Activated CD4-positive, alpha-beta T cell treated with anti-CD3 and anti-CD28 coated beads for 36 hours (primary cell): ENCODE measurements at regions of chr15 and their contacts with region 1.

Region 1: DNA sequence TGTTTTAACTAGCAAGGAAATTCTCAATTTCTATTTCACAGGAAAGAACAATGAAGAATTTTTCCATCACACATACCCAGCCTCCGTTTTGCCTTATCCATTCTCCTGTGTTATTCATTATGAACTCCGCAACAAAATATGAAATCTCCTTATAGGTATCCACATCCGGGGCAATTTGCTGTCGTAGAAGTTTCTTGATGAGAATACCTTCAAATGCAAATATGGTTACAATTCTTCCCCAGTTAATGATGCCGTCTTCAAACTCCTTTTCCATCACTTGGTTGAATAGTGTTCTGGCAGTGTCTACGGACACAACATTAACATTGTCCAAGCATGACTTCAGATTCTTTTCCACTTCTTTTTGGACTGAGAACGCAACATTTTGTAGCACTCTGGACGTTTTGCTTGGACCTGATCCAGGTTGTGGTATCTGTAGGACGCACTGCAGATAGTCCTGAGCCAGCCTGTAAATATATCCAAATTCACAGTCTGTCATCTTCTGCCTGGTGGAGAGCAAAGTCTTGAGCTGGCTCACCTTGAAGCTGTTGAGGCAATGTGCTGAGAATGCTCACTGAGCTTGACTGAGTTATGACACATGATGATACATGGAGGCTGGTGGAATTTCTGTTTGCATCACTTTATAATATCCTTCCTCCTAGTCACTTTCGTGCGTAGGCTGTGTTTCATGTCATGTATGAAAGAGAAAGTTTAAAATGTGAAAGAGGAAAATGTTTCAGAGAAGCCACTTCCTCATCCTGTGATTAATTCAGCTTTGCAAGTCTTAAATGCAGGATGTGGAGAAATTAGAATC is at the start of gene BCL2A1:
- DNase-seq: peak; percentile 83
- ATAC-seq: peak; percentile 72
- H3K4me3 Mint-ChIP-seq: peak within 1 kb of the TSS; percentile 92
- H3K27ac Mint-ChIP-seq: peak within 1 kb of the TSS; percentile 99
- H3K4me1 Mint-ChIP-seq: peaks cover 46% of the 10 kb centered on the region
- H3K27me3 Mint-ChIP-seq: no peaks in the 10 kb centered on the region
- total RNA-seq, gene BCL2A1: 82.2 to 103 TPM

Region 2: GRCh38 chr15:79640206-79640605 is 330.6 kb before region 1 on chr15:
- CTCF ChIA-PET with region 1: no interaction called
- POLR2A ChIA-PET with region 1: no interaction called
- intact Hi-C with region 1: loop called in 1 of 2 experiments (anchors 5 kb)
- DNase-seq: no peak
- ATAC-seq: no peak
- H3K4me3 Mint-ChIP-seq: no peak overlapping the region
- H3K27ac Mint-ChIP-seq: no peak overlapping the region
- H3K4me1 Mint-ChIP-seq: peaks cover 8% of the 10 kb centered on the region
- H3K27me3 Mint-ChIP-seq: peaks cover 29% of the 10 kb centered on the region

Region 3: DNA sequence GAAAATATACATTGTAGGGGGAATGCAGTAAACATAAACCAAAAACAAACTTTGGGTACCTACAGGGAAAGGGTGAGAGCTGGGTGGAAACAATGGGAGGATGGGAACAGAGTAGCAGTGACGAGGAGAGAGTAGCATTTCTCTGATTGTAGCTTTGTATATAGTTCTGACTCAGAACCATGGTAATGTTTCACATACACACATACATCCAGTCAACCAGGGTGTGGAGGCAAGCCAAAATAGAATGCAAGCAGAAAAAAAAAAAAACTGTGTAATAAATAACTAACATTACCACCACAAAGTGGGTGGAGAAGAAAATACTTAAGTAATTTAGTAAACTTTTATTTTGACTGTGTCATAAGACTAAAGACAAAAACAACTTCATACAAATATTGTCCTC is 27.0 kb before region 1 on chr15:
- CTCF ChIA-PET with region 1: interaction called, 3 read pairs
- POLR2A ChIA-PET with region 1: interaction called, 3 read pairs
- intact Hi-C with region 1: loop called (anchors 2 kb)
- DNase-seq: no peak
- ATAC-seq: peak; percentile 75
- H3K4me3 Mint-ChIP-seq: no peak overlapping the region
- H3K27ac Mint-ChIP-seq: no peak overlapping the region
- H3K4me1 Mint-ChIP-seq: peaks cover 17% of the 10 kb centered on the region
- H3K27me3 Mint-ChIP-seq: peaks cover 2% of the 10 kb centered on the region

Region 4: GRCh38 chr15:80031841-80032240 is 61.0 kb after region 1 on chr15:
- CTCF ChIA-PET with region 1: no interaction called
- POLR2A ChIA-PET with region 1: interaction called, 3 read pairs
- intact Hi-C with region 1: loop called in 1 of 2 experiments (anchors 1 kb)
- DNase-seq: peak; percentile 64
- ATAC-seq: peak; percentile 85
- H3K4me3 Mint-ChIP-seq: no peak overlapping the region
- H3K27ac Mint-ChIP-seq: peak overlapping the region; percentile 72
- H3K4me1 Mint-ChIP-seq: peaks cover 25% of the 10 kb centered on the region
- H3K27me3 Mint-ChIP-seq: no peaks in the 10 kb centered on the region

Region 5: DNA sequence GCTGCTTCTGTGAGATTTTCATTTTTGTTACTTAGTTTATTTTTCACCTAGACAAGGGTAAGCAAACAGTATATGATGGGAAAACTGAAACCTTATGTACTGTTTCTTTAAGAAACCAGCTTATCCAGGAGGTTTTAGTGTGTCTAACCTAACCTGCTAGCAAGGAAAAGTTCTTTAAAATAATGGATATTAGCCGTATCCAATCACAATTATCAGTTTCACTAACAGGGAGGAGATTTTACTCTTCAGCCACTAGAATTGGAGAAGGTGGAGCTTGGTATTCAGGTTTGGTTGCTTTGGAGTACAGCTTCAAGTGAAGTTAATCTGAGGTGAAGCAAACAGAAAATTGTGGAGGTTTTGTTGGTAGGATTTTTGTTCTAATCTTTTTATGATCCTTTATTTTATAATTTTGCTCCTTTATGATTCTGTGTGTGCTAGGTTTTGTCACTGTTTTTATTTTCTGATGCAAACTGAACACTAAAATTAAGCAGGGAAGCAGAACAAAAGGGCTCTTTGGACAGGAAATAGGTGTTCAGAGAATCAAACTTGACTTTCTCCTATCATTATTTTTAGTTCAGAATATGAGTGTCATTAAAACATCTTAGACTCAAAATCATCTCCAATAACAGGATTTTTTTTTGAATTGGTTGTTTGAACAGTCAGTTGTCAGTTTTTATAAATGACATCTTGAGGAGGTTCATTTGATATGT is 101.6 kb after region 1 on chr15:
- CTCF ChIA-PET with region 1: no interaction called
- POLR2A ChIA-PET with region 1: no interaction called
- intact Hi-C with region 1: no loop called
- DNase-seq: no peak
- ATAC-seq: peak; percentile 98
- H3K4me3 Mint-ChIP-seq: peak overlapping the region; percentile 80
- H3K27ac Mint-ChIP-seq: peak overlapping the region; percentile 40
- H3K4me1 Mint-ChIP-seq: peaks cover 59% of the 10 kb centered on the region
- H3K27me3 Mint-ChIP-seq: no peaks in the 10 kb centered on the region

Region 6: GRCh38 chr15:80317389-80318182 is 346.8 kb after region 1 on chr15:
- CTCF ChIA-PET with region 1: no interaction called
- POLR2A ChIA-PET with region 1: no interaction called
- intact Hi-C with region 1: no loop called
- DNase-seq: peak; percentile 24
- ATAC-seq: no peak
- H3K4me3 Mint-ChIP-seq: no peak overlapping the region
- H3K27ac Mint-ChIP-seq: no peak overlapping the region
- H3K4me1 Mint-ChIP-seq: no peaks in the 10 kb centered on the region
- H3K27me3 Mint-ChIP-seq: peaks cover 25% of the 10 kb centered on the region

Region 7: GRCh38 chr15:81000624-81001151 is 1029.9 kb after region 1 on chr15 and contains the start of gene TLNRD1:
- CTCF ChIA-PET with region 1: no interaction called
- POLR2A ChIA-PET with region 1: no interaction called
- intact Hi-C with region 1: loop called in 1 of 2 experiments (anchors 5 kb)
- DNase-seq: peak; percentile 90
- ATAC-seq: peak; percentile 70
- H3K4me3 Mint-ChIP-seq: peak within 1 kb of the TSS; percentile 92
- H3K27ac Mint-ChIP-seq: peak within 1 kb of the TSS; percentile 92
- H3K4me1 Mint-ChIP-seq: peaks cover 45% of the 10 kb centered on the region
- H3K27me3 Mint-ChIP-seq: no peaks in the 10 kb centered on the region
- total RNA-seq, gene TLNRD1: 11.2 to 16.9 TPM

Region 8: DNA sequence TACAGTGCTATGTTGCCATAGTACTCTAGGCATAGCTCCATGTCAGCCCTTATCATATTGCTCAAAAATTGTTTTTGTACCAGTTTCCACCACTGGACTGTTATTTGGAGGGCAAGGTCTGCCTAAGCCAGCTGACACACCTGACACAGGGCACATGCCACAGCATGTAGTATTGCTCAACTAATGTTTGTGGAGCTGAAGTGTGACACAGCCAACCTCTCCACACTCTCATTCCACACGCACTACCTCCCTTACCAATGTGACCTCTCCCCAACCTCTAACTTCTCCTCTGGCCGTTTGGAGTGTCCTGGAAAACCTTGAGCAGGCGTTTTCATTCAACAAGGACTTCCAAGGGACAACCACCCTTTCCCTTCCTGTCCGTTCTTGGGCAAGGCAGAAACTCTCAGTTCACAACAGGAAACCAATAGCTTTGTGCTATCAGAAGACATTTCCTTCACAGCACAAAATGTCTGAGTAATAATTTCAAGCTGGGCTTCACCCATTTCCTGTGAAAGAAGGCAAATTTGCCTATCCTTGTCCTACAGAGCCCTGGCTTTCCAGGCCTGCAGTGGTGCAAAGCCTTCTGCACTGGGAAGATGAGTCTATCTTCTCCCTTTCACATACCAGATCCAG is 1068.3 kb after region 1 on chr15:
- CTCF ChIA-PET with region 1: no interaction called
- POLR2A ChIA-PET with region 1: no interaction called
- intact Hi-C with region 1: no loop called
- DNase-seq: no peak
- ATAC-seq: peak; percentile 36
- H3K4me3 Mint-ChIP-seq: no peak overlapping the region
- H3K27ac Mint-ChIP-seq: no peak overlapping the region
- H3K4me1 Mint-ChIP-seq: peaks cover 7% of the 10 kb centered on the region
- H3K27me3 Mint-ChIP-seq: no peaks in the 10 kb centered on the region